AG04450 (cell line): ENCODE measurements at regions of chr6 and their contacts with region 1.

Region 1: DNA sequence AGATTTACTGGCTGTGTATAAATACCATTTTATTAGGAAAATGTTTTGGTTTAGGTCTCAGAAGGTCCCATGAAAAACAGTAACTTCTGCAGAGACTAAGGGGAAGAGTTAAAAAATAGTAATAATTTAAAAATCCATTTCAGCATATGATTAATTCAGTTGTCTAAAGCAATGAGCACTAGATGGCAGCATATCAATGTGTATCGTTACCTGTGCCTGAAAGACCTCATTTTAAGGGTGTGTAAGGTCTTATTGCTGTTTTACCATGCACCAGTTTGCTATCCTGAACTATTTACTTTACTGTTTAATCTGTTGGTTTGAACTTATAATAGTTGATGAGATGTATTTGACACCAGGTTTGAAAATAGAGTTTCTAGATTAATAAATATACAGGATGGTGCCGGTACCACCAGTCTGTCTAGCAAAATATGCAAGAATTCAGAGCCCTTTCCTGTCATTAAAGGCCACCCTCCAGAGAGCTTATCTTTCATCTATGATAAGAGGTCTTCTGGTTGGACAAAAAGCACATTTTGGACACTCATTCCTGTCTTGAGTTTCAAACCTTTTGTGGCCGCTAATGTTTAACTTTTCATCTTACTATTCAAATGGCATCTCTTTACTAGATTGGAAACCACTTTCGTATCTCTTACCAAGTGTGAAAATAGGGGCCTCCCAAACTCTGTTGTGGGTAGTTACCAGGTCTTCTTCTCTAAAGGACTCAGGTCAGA is 8.9 kb upstream of the AHI1 start:
- DNase-seq: no peak
- H3K4me3 ChIP-seq: no peak overlapping the region
- H3K27ac ChIP-seq: no peak overlapping the region
- H3K27me3 ChIP-seq: no peaks in the 10 kb centered on the region
- CTCF ChIP-seq: peak; percentile 58

Region 2: DNA sequence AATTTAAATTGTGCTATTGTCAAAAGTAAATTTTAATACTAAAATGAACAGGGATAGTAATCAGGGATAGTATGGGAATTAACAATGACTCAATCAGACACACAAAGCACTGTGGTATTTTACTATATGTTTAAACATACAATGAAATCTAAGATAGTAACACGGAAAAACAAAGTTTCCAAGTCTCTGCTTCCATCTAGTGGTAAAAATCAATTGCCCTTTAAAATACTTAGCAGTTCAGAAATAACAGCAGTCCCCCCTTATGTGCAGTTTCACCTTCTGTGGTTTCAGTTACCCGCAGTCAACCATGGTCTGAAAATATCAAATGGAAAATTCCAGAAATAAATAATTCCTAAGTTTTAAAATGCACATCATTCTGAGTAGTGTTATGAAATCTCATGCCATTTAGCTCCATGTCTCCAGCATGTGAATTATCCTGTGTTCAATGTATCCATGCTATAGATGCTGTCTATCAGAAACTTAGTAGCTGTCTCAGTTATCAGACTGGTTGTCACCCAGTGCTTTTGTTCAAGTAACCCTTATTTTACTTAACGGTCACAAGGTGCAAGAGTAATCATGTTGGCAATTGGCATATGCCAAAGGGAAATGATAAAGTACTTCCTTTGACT is 67.4 kb before region 1 on chr6:
- CTCF ChIA-PET with region 1: no interaction called
- POLR2A ChIA-PET with region 1: no interaction called
- DNase-seq: no peak
- H3K4me3 ChIP-seq: no peak overlapping the region
- H3K27ac ChIP-seq: no peak overlapping the region
- H3K27me3 ChIP-seq: no peaks in the 10 kb centered on the region
- CTCF ChIP-seq: peak; percentile 65

Region 3: DNA sequence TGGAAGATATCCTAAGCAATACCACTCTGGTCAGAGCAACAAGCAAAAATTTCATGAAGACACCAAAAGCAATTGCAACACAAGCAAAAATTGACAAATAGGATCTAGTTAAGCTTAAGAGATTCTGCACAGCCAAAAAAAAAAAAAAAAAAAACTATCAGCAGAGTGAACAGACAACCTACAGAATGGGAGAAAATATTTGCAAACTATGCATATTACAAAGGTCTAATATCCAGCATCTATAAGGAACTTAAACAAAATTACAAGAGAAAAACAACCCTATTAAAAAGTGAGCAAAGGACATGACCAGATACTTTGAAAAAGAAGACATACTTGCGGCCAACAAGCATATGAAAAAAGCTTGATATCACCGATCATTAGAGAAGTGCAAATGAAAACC is 11.1 kb after region 1 on chr6:
- CTCF ChIA-PET with region 1: interaction called, 10 read pairs
- POLR2A ChIA-PET with region 1: no interaction called
- DNase-seq: no peak
- H3K4me3 ChIP-seq: no peak overlapping the region
- H3K27ac ChIP-seq: no peak overlapping the region
- H3K27me3 ChIP-seq: no peaks in the 10 kb centered on the region
- CTCF ChIP-seq: no peak